Endothelial cell of umbilical vein (primary cell): ENCODE measurements at regions of chr1 and their contacts with region 1.

Region 1: DNA sequence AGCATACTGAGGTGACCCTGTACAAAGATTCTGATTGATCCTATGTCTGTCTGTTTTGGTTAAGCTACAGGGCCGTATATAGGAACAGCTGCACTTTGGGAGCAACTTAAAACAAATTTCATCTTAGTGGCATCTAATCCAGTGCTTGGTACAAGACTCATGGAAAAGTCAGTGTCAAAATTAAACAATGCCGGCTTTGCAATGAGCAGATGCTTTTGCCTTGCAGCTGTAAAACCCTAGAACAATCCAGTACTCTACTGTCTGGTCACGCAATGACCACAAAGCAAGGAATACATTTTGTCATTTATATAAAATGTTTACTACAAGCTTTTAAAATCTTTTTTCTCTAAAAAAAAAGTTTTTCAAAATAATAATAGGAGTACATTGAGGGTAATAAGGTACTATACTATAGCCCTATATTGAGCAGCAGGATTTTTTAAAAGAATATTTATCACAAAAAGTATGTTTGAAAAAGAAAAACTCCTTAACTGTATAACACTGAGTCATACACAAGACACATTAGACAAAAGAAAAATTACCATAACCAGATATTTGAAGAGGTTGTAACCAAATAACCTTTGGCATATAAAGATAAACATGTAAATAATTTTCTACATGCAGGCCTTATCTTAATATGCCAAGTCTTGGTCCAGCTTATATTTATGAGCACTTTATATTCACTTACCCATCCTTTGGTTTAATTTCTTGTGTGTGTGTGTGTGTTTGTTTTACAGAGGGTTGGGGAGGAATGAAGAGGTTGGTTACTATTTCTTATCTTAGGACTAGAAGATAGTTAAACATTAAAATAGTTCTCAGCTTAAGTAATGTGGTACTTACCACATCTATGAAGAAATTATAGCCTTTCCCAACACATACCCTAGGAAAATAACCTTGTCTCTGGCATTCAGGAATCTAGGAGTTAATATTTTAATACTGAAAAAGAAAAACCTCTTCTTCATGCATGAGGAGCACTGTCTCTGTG is 262.3 kb downstream of the FAF1 start:
- DNase-seq: no peak
- H3K4me3 ChIP-seq: no peak overlapping the region
- H3K27ac ChIP-seq: no peak overlapping the region
- H3K4me1 ChIP-seq: no peaks in the 10 kb centered on the region
- H3K27me3 ChIP-seq: no peaks in the 10 kb centered on the region
- CTCF ChIP-seq: no peak
- POLR2A ChIP-seq: no peak

Region 2: DNA sequence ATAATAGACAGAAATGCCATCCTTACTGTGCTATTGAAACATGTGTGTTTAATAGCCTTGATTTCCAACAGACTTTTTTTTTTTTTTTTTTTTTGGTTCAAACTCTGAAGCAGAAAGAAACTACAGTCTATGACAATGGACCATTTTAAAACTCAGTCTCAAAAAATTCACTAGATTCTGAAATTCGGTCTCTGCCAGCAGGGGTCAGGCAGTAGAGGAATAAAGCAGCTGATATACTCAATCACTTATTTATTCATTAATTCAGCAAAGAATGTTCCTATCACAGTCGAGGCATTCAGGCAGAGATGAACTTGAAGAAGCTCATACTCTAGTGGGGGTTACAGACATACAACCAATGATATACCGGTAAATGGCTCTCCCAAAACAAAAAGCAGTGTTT is 13.5 kb before region 1 on chr1:
- CTCF ChIA-PET with region 1: interaction called, 12 read pairs
- POLR2A ChIA-PET with region 1: no interaction called
- dilution Hi-C with region 1: no loop called
- intact Hi-C with region 1: loop called (anchors 1 kb)
- DNase-seq: no peak
- H3K4me3 ChIP-seq: no peak overlapping the region
- H3K27ac ChIP-seq: no peak overlapping the region
- H3K4me1 ChIP-seq: no peaks in the 10 kb centered on the region
- H3K27me3 ChIP-seq: no peaks in the 10 kb centered on the region
- CTCF ChIP-seq: no peak
- POLR2A ChIP-seq: no peak